CD8-positive, alpha-beta T cell (primary cell): ENCODE measurements at regions of chr13 and their contacts with region 1.

Region 1: GRCh38 chr13:101144808-101145419 is 271.4 kb downstream of the NALCN start:
- DNase-seq: peak in 4 of 9 experiments; percentile 12 to 66 (median 37)
- ATAC-seq: peak; percentile 58
- H3K4me3 ChIP-seq: no peak overlapping the region
- H3K4me3 Mint-ChIP-seq: no peak overlapping the region
- H3K27ac ChIP-seq: no peak overlapping the region
- H3K27ac Mint-ChIP-seq: no peak overlapping the region
- H3K4me1 ChIP-seq: no peaks in the 10 kb centered on the region
- H3K4me1 Mint-ChIP-seq: no peaks in the 10 kb centered on the region
- H3K27me3 ChIP-seq: peaks cover 0 to 3% of the 10 kb centered on the region in 2 experiments
- H3K27me3 Mint-ChIP-seq: peaks cover 40% of the 10 kb centered on the region
- CTCF ChIP-seq: peak; percentile 71

Region 2: DNA sequence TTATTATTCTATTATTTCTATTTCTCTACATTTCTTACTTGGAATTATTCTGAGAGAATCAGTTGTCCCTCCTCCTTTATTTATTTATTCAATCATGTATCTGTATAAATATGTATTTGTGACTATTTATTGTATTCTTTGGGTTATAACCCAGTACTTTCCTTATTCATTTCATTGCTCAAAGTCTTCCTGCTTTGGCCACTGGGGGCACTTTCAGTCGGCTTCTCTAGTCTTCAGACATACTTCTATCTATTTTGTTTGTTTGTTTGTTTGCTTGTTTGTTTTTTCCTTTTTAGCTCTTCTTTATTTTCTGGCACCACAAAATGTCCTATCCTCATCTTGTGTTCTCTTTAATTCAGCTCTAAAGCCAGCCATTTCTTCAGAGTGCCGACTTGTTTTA is 11.0 kb after region 1 on chr13:
- CTCF ChIA-PET with region 1: interaction called, 30 read pairs
- POLR2A ChIA-PET with region 1: interaction called, 3 read pairs
- intact Hi-C with region 1: no loop called
- DNase-seq: no peak
- ATAC-seq: no peak
- H3K4me3 ChIP-seq: no peak overlapping the region
- H3K4me3 Mint-ChIP-seq: no peak overlapping the region
- H3K27ac ChIP-seq: no peak overlapping the region
- H3K27ac Mint-ChIP-seq: no peak overlapping the region
- H3K4me1 ChIP-seq: no peaks in the 10 kb centered on the region
- H3K4me1 Mint-ChIP-seq: no peaks in the 10 kb centered on the region
- H3K27me3 ChIP-seq: no peaks in the 10 kb centered on the region
- H3K27me3 Mint-ChIP-seq: peaks cover 14% of the 10 kb centered on the region
- CTCF ChIP-seq: peak; percentile 37

Region 3: GRCh38 chr13:101492251-101492910 is 347.5 kb after region 1 on chr13:
- CTCF ChIA-PET with region 1: no interaction called
- POLR2A ChIA-PET with region 1: no interaction called
- intact Hi-C with region 1: no loop called
- DNase-seq: no peak
- ATAC-seq: no peak
- H3K4me3 ChIP-seq: no peak overlapping the region
- H3K4me3 Mint-ChIP-seq: no peak overlapping the region
- H3K27ac ChIP-seq: no peak overlapping the region
- H3K27ac Mint-ChIP-seq: no peak overlapping the region
- H3K4me1 ChIP-seq: no peaks in the 10 kb centered on the region
- H3K4me1 Mint-ChIP-seq: no peaks in the 10 kb centered on the region
- H3K27me3 ChIP-seq: no peaks in the 10 kb centered on the region
- H3K27me3 Mint-ChIP-seq: peaks cover 3% of the 10 kb centered on the region
- CTCF ChIP-seq: no peak

Region 4: GRCh38 chr13:101514788-101515187 is 369.9 kb after region 1 on chr13:
- CTCF ChIA-PET with region 1: no interaction called
- POLR2A ChIA-PET with region 1: no interaction called
- intact Hi-C with region 1: loop called (anchors 2 to 5 kb)
- DNase-seq: peak in 3 of 9 experiments; percentile 8 to 66 (median 55)
- ATAC-seq: no peak
- H3K4me3 ChIP-seq: no peak overlapping the region
- H3K4me3 Mint-ChIP-seq: no peak overlapping the region
- H3K27ac ChIP-seq: no peak overlapping the region
- H3K27ac Mint-ChIP-seq: no peak overlapping the region
- H3K4me1 ChIP-seq: no peaks in the 10 kb centered on the region
- H3K4me1 Mint-ChIP-seq: peaks cover 3% of the 10 kb centered on the region
- H3K27me3 ChIP-seq: no peaks in the 10 kb centered on the region
- H3K27me3 Mint-ChIP-seq: peaks cover 6% of the 10 kb centered on the region
- CTCF ChIP-seq: peak; percentile 60

Region 5: GRCh38 chr13:101739382-101740178 is 594.7 kb after region 1 on chr13:
- CTCF ChIA-PET with region 1: no interaction called
- POLR2A ChIA-PET with region 1: no interaction called
- intact Hi-C with region 1: no loop called
- DNase-seq: no peak
- ATAC-seq: no peak
- H3K4me3 ChIP-seq: no peak overlapping the region
- H3K4me3 Mint-ChIP-seq: no peak overlapping the region
- H3K27ac ChIP-seq: no peak overlapping the region
- H3K27ac Mint-ChIP-seq: no peak overlapping the region
- H3K4me1 ChIP-seq: no peaks in the 10 kb centered on the region
- H3K4me1 Mint-ChIP-seq: no peaks in the 10 kb centered on the region
- H3K27me3 ChIP-seq: no peaks in the 10 kb centered on the region
- H3K27me3 Mint-ChIP-seq: no peaks in the 10 kb centered on the region
- CTCF ChIP-seq: no peak

Region 6: DNA sequence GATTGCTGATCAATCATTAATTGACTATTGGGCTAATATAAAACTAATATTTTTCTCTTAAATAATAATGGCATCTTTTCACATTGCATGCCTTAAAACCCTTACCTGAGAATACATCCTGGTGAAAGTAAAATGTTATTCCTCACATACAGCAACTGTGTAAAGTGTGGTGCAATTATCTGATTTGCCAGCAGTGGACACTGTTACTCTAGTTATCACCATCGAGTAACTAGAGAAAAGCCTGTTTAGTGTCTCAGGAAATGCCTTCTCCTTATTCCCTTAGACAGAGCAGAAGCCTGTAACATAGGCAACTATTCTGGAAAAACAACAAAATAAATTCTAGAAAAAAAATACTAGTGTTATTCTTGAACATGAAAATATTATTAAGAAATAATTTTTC is 797.1 kb after region 1 on chr13:
- CTCF ChIA-PET with region 1: no interaction called
- POLR2A ChIA-PET with region 1: no interaction called
- intact Hi-C with region 1: loop called in 1 of 2 experiments (anchors 10 kb)
- DNase-seq: peak in 1 of 9 experiments; percentile 4
- ATAC-seq: no peak
- H3K4me3 ChIP-seq: no peak overlapping the region
- H3K4me3 Mint-ChIP-seq: no peak overlapping the region
- H3K27ac ChIP-seq: no peak overlapping the region
- H3K27ac Mint-ChIP-seq: no peak overlapping the region
- H3K4me1 ChIP-seq: no peaks in the 10 kb centered on the region
- H3K4me1 Mint-ChIP-seq: no peaks in the 10 kb centered on the region
- H3K27me3 ChIP-seq: no peaks in the 10 kb centered on the region
- H3K27me3 Mint-ChIP-seq: no peaks in the 10 kb centered on the region
- CTCF ChIP-seq: no peak

Region 7: GRCh38 chr13:102555917-102556553 is 1411.1 kb after region 1 on chr13:
- CTCF ChIA-PET with region 1: interaction called, 23 read pairs
- POLR2A ChIA-PET with region 1: no interaction called
- intact Hi-C with region 1: loop called (anchors 1 to 2 kb)
- DNase-seq: peak in 2 of 9 experiments; percentile 37 to 45
- ATAC-seq: peak; percentile 42
- H3K4me3 ChIP-seq: no peak overlapping the region
- H3K4me3 Mint-ChIP-seq: no peak overlapping the region
- H3K27ac ChIP-seq: no peak overlapping the region
- H3K27ac Mint-ChIP-seq: no peak overlapping the region
- H3K4me1 ChIP-seq: no peaks in the 10 kb centered on the region
- H3K4me1 Mint-ChIP-seq: no peaks in the 10 kb centered on the region
- H3K27me3 ChIP-seq: no peaks in the 10 kb centered on the region
- H3K27me3 Mint-ChIP-seq: peaks cover 10% of the 10 kb centered on the region
- CTCF ChIP-seq: peak; percentile 52